Right ventricle myocardium inferior (tissue), 1 donor: ENCODE measurements at regions of chr17 and their contacts with region 1.

Region 1: GRCh38 chr17:57939797-57940196 is 15.4 kb downstream of the CUEDC1 start:
- DNase-seq: peak; percentile 78
- ATAC-seq: no peak

Region 2: DNA sequence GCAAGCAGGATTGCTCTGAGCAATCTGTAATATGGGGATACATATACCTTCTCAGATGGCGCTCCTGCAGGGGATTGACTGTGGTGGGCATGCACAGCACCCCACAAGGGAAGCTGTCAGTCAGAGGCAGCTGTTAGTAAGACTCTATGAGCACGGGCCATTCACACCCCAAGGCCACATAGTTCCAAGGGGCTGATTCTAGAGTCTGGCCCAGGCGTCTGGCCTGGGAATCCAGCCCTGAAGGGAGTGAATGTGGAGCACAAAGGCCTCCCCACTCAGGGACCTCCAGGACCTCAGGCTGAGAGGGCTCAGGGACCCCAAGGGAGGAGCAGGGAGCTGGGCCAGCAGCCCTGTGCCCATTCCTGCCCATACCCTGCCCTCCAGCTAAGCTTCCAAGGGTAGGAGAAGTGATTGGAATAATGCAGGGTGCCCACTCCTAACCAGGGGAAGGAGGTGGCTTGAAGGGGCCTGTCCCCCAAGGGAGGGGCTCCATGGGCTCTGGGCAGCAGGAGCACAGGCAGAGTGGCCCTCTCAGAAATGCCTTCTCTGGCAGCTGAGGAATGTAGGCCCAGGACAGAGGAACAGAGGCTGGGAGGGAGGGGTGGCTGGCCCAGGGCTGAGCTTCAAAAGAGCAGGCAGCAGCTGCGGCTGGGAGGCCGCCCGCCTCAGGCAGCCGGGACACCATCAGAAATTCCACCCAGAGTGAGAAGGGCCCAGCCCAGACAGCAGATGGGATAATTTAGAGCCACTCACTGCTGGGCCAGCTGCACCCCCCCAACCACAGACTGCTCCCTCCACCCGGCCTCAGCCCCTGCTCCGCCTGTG is 41.1 kb before region 1 on chr17:
- intact Hi-C with region 1: loop called (anchors 2 kb)
- DNase-seq: peak; percentile 82
- ATAC-seq: peak; percentile 81

Region 3: GRCh38 chr17:57916925-57917858 is 22.6 kb before region 1 on chr17:
- intact Hi-C with region 1: loop called (anchors 2 kb)
- DNase-seq: no peak
- ATAC-seq: peak; percentile 72

Region 4: GRCh38 chr17:57955183-57955931 is 15.6 kb after region 1 on chr17 and contains the start of gene CUEDC1:
- intact Hi-C with region 1: loop called (anchors 2 kb)
- DNase-seq: peak; percentile 94
- ATAC-seq: peak; percentile 75
- total RNA-seq, gene CUEDC1: 49.1 TPM

Region 5: GRCh38 chr17:58006924-58007780 is 67.4 kb after region 1 on chr17 and contains the start of gene SRSF1:
- intact Hi-C with region 1: no loop called
- DNase-seq: peak; percentile 99
- ATAC-seq: peak; percentile 96
- total RNA-seq, gene SRSF1: 92.8 TPM

Region 6: GRCh38 chr17:58032691-58033415 is 93.1 kb after region 1 on chr17:
- intact Hi-C with region 1: no loop called
- DNase-seq: no peak
- ATAC-seq: no peak